CD8-positive, alpha-beta T cell (primary cell): ENCODE measurements at regions of chr6 and their contacts with region 1.

Region 1: DNA sequence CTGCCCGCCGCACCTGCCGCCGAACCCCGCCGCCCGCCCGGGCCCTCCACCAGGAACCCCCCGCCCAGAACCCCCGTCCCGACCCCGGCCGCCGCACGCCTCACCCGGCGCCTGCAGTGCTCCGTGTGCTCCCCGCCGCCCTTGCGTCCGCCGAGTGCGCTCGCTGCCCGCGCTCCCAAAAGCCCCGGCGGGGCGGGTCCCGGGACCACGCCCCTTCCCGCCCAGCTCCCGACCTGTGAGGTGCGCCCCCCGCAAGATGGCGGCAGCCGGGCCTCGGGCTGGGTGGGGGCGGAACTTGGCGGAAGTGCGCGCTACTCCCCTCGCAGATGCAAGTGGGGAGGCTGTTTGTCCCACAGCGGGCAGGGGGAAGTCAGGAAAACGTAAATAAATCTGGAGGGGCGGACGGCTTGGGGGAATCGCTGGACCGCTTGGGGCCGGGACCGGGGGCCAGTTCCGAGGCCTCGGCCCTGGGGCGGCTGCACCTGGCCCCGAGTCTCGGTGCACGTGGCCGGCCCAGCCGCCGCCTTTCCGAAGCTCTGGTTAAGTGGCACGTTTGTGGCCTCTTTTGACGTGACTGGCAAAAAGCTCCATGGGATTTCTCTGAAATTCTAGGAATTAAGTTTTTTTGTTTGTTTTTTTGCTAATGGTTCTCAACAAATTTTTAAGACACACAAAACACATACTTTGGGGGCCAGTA is at the start of gene EZR:
- DNase-seq: peak; percentile 75 to 95 (median 88)
- ATAC-seq: peak; percentile 63
- H3K4me3 ChIP-seq: peak within 1 kb of the TSS; percentile 49 to 83
- H3K4me3 Mint-ChIP-seq: peak within 1 kb of the TSS; percentile 98
- H3K27ac ChIP-seq: peak within 1 kb of the TSS; percentile 89 to 91
- H3K27ac Mint-ChIP-seq: peak within 1 kb of the TSS; percentile 97
- H3K4me1 ChIP-seq: peaks cover 27% of the 10 kb centered on the region
- H3K4me1 Mint-ChIP-seq: peaks cover 43% of the 10 kb centered on the region
- H3K27me3 ChIP-seq: no peaks in the 10 kb centered on the region
- H3K27me3 Mint-ChIP-seq: no peaks in the 10 kb centered on the region
- CTCF ChIP-seq: no peak
- total RNA-seq, gene EZR: 626 to 627 TPM

Region 2: GRCh38 chr6:158793432-158793831 is 25.9 kb before region 1 on chr6:
- CTCF ChIA-PET with region 1: interaction called, 14 read pairs
- POLR2A ChIA-PET with region 1: interaction called, 7 read pairs
- intact Hi-C with region 1: loop called in 1 of 2 experiments (anchors 1 kb)
- DNase-seq: peak in 2 of 9 experiments; percentile 59 to 70
- ATAC-seq: peak; percentile 22
- H3K4me3 ChIP-seq: no peak overlapping the region
- H3K4me3 Mint-ChIP-seq: peak overlapping the region; percentile 32
- H3K27ac ChIP-seq: peak overlapping the region in 1 of 2 experiments; percentile 32
- H3K27ac Mint-ChIP-seq: peak overlapping the region; percentile 45
- H3K4me1 ChIP-seq: peaks cover 73% of the 10 kb centered on the region
- H3K4me1 Mint-ChIP-seq: peaks cover 81% of the 10 kb centered on the region
- H3K27me3 ChIP-seq: no peaks in the 10 kb centered on the region
- H3K27me3 Mint-ChIP-seq: no peaks in the 10 kb centered on the region
- CTCF ChIP-seq: peak; percentile 36

Region 3: DNA sequence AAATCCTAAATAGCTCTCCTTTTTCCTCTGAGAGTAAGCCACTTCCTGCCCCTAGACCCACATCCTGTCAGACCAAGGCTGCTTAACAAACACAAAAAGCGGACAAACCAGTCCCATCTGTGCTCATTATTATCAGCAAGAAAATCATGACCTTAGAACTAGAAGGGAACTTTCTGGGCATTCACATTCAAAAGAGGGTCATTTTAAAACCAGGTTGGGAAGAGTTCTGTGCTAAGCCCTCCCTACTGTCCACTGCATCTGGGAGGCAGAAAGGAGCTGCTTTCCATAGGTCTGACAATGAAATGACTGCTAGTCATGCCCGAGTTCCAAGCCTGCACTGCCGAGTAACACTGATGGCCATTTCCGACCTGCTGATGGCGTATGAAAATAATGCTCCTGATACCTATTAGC is 15.6 kb before region 1 on chr6:
- CTCF ChIA-PET with region 1: interaction called, 3 read pairs
- POLR2A ChIA-PET with region 1: interaction called, 8 read pairs
- intact Hi-C with region 1: loop called in 1 of 2 experiments (anchors 1 kb)
- DNase-seq: peak in 7 of 9 experiments; percentile 33 to 79 (median 60)
- ATAC-seq: peak; percentile 48
- H3K4me3 ChIP-seq: peak overlapping the region; percentile 28 to 40
- H3K4me3 Mint-ChIP-seq: peak overlapping the region; percentile 73
- H3K27ac ChIP-seq: peak overlapping the region; percentile 25 to 79
- H3K27ac Mint-ChIP-seq: peak overlapping the region; percentile 86
- H3K4me1 ChIP-seq: peaks cover 90% of the 10 kb centered on the region
- H3K4me1 Mint-ChIP-seq: peaks cover 91% of the 10 kb centered on the region
- H3K27me3 ChIP-seq: no peaks in the 10 kb centered on the region
- H3K27me3 Mint-ChIP-seq: no peaks in the 10 kb centered on the region
- CTCF ChIP-seq: no peak

Region 4: GRCh38 chr6:158853072-158853871 is 33.9 kb after region 1 on chr6:
- CTCF ChIA-PET with region 1: interaction called, 3 read pairs
- POLR2A ChIA-PET with region 1: interaction called, 14 read pairs
- intact Hi-C with region 1: loop called (anchors 1 kb)
- DNase-seq: peak; percentile 75 to 95 (median 88)
- ATAC-seq: peak; percentile 74
- H3K4me3 ChIP-seq: peak overlapping the region; percentile 7 to 52
- H3K4me3 Mint-ChIP-seq: no peak overlapping the region
- H3K27ac ChIP-seq: peak overlapping the region; percentile 77 to 98
- H3K27ac Mint-ChIP-seq: no peak overlapping the region
- H3K4me1 ChIP-seq: peaks cover 58% of the 10 kb centered on the region
- H3K4me1 Mint-ChIP-seq: peaks cover 44% of the 10 kb centered on the region
- H3K27me3 ChIP-seq: no peaks in the 10 kb centered on the region
- H3K27me3 Mint-ChIP-seq: no peaks in the 10 kb centered on the region
- CTCF ChIP-seq: no peak

Region 5: GRCh38 chr6:158916617-158917016 is 97.3 kb after region 1 on chr6:
- CTCF ChIA-PET with region 1: no interaction called
- POLR2A ChIA-PET with region 1: no interaction called
- intact Hi-C with region 1: loop called in 1 of 2 experiments (anchors 1 kb)
- DNase-seq: no peak
- ATAC-seq: no peak
- H3K4me3 ChIP-seq: no peak overlapping the region
- H3K4me3 Mint-ChIP-seq: no peak overlapping the region
- H3K27ac ChIP-seq: no peak overlapping the region
- H3K27ac Mint-ChIP-seq: no peak overlapping the region
- H3K4me1 ChIP-seq: peaks cover 27% of the 10 kb centered on the region
- H3K4me1 Mint-ChIP-seq: peaks cover 50% of the 10 kb centered on the region
- H3K27me3 ChIP-seq: no peaks in the 10 kb centered on the region
- H3K27me3 Mint-ChIP-seq: no peaks in the 10 kb centered on the region
- CTCF ChIP-seq: no peak

Region 6: GRCh38 chr6:158958504-158959386 is 139.4 kb after region 1 on chr6:
- CTCF ChIA-PET with region 1: interaction called, 3 read pairs
- POLR2A ChIA-PET with region 1: no interaction called
- intact Hi-C with region 1: loop called in 1 of 2 experiments (anchors 1 kb)
- DNase-seq: peak in 5 of 9 experiments; percentile 21 to 47 (median 35)
- ATAC-seq: peak; percentile 65
- H3K4me3 ChIP-seq: no peak overlapping the region
- H3K4me3 Mint-ChIP-seq: no peak overlapping the region
- H3K27ac ChIP-seq: no peak overlapping the region
- H3K27ac Mint-ChIP-seq: no peak overlapping the region
- H3K4me1 ChIP-seq: no peaks in the 10 kb centered on the region
- H3K4me1 Mint-ChIP-seq: no peaks in the 10 kb centered on the region
- H3K27me3 ChIP-seq: no peaks in the 10 kb centered on the region
- H3K27me3 Mint-ChIP-seq: no peaks in the 10 kb centered on the region
- CTCF ChIP-seq: peak; percentile 21

Region 7: GRCh38 chr6:159761873-159762680 is 942.7 kb after region 1 on chr6 and contains the start of gene ACAT2:
- CTCF ChIA-PET with region 1: no interaction called
- POLR2A ChIA-PET with region 1: no interaction called
- intact Hi-C with region 1: no loop called
- DNase-seq: peak; percentile 81 to 96 (median 91)
- ATAC-seq: peak; percentile 86
- H3K4me3 ChIP-seq: peak within 1 kb of the TSS; percentile 85 to 99
- H3K4me3 Mint-ChIP-seq: peak within 1 kb of the TSS; percentile 96
- H3K27ac ChIP-seq: peak within 1 kb of the TSS; percentile 97 to 99
- H3K27ac Mint-ChIP-seq: peak within 1 kb of the TSS; percentile 97
- H3K4me1 ChIP-seq: peaks cover 16% of the 10 kb centered on the region
- H3K4me1 Mint-ChIP-seq: peaks cover 29% of the 10 kb centered on the region
- H3K27me3 ChIP-seq: no peaks in the 10 kb centered on the region
- H3K27me3 Mint-ChIP-seq: no peaks in the 10 kb centered on the region
- CTCF ChIP-seq: no peak
- total RNA-seq, gene ACAT2: 23.3 to 24.1 TPM